A549 (cell line): ENCODE measurements at regions of chr5 and their contacts with region 1.

Region 1: DNA sequence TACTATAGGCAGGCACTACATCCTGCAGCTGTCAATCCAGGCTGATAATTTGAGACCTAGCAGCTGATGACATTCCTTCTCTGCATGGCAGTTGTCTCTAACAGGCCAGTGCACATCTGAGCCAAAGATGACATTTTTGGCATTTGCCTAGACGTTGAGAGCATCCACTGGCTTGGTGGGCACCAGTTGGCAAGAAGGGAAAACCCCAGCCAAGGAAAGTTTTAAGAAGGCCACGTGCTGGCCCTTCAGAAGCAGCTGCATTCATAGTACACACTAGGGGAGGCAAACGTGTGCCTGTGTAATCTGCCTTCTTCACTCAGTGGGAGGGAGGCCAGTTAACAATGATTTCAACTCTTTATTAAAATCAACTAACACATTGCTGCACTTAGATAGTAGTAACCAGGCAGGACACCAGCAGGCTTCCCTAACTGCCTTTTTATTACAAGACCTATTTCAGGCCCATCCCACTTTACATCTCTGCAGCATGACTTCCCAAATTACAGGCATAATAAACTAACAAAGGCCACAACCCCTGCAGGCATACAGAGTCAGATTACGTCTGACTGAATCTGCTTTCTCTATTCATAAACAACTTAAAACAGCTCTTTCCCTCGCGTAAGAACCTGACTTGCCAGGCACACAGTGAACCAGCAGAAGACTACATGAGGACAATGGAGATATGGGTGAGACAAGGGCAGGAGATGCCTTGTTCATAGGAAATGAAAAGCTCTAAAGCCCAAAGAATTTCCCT is 576.3 kb downstream of the PDE4D start:
- DNase-seq: no peak
- ATAC-seq: peak; percentile 16 to 33; a peak in 3 of 6 replicates
- H3K4me3 ChIP-seq: no peak overlapping the region
- H3K27ac ChIP-seq: peak overlapping the region; percentile 8 to 12; a peak in 3 of 6 replicates
- H3K4me1 ChIP-seq: peaks cover 81% of the 10 kb centered on the region
- CTCF ChIP-seq: no peak
- EP300 ChIP-seq: no peak
- POLR2A ChIP-seq: no peak
- RAD21 ChIP-seq: no peak

Region 2: GRCh38 chr5:59328709-59329296 is 11.6 kb after region 1 on chr5:
- CTCF ChIA-PET with region 1: interaction called, 17 read pairs
- POLR2A ChIA-PET with region 1: no interaction called
- DNase-seq: peak; percentile 21 to 74
- ATAC-seq: peak; percentile 76 to 79
- H3K4me3 ChIP-seq: no peak overlapping the region
- H3K27ac ChIP-seq: peak overlapping the region; percentile 63 to 78
- H3K4me1 ChIP-seq: peaks cover 84% of the 10 kb centered on the region
- CTCF ChIP-seq: no peak
- EP300 ChIP-seq: no peak
- POLR2A ChIP-seq: no peak
- RAD21 ChIP-seq: no peak